Heart right ventricle (tissue), 16 donors: ENCODE measurements at regions of chr9 and their contacts with region 1.

Region 1: GRCh38 chr9:87324613-87325194 is 173.0 kb upstream of the DAPK1 start:
- DNase-seq: peak in 1 of 2 donors; percentile 18
- ATAC-seq: peak in 7 of 8 donors; percentile 56 to 85 (median 71)
- H3K4me3 ChIP-seq: no peak overlapping the region
- H3K27ac ChIP-seq: no peak overlapping the region
- H3K4me1 ChIP-seq: no peaks in the 10 kb centered on the region
- H3K27me3 ChIP-seq: peaks cover 0 to 4% (median 0%) of the 10 kb centered on the region in 7 donors
- CTCF ChIP-seq: peak; percentile 60 to 86 (median 82)

Region 2: GRCh38 chr9:86434039-86434726 is 890.5 kb before region 1 on chr9:
- intact Hi-C with region 1: loop called (anchors 2 to 10 kb)
- DNase-seq: peak in 1 of 2 donors; percentile 17
- ATAC-seq: peak in 7 of 8 donors; percentile 47 to 78 (median 71)
- H3K4me3 ChIP-seq: peak overlapping the region in 2 of 10 donors; percentile 14 to 18
- H3K27ac ChIP-seq: peak overlapping the region in 3 of 10 donors; percentile 4 to 35 (median 17)
- H3K4me1 ChIP-seq: peaks cover 0 to 4% (median 0%) of the 10 kb centered on the region in 9 donors
- H3K27me3 ChIP-seq: peaks cover 0 to 11% (median 4%) of the 10 kb centered on the region in 7 donors
- CTCF ChIP-seq: peak; percentile 47 to 82 (median 73)

Region 3: DNA sequence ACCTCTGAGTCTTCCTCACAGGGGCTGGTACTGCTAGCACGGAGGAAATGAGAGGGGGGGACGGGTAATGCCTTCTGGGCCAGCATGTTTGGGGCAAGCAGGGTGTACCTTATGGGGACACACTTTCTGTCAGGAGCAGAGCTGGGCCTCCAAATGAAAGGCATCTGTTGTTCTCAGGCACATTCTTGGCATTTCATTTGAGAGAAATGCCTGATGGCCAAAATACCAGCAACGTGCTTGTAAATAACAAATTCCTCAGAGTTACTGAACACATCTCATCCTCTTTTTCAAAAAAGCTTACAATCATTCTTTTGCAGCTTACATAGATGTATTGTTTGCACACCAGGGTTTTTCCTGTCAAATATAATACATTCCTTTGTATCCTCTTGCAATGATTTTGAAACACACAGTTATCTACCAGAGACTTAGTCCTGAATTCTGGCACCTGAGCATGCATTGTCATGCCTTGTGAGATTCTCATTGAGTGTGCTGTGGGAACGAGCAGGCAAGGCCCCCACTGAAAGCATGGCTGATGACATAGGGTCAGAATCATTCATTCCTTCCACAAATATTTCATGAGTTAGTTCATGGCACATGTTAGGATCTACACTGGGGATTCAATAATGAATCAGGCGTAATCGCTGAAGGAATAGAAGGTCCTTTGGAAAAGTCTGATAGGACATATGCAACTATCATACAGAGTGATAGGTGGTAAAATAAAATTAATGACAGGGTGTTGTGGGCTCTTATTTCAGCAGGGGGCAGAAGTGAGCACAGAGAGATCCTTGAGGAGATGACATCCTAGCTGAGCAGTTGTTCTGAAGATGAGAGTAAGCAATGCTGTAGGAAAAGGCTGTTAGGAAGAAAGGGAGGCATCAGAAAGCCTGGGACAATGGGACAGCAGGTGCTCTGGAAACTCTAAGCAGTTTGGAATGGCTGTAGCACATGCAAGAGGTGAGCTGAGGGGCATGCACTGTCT is 709.5 kb before region 1 on chr9:
- intact Hi-C with region 1: loop called in 2 of 10 experiments (anchors 5 to 10 kb)
- DNase-seq: peak in 1 of 2 donors; percentile 15
- ATAC-seq: peak in 3 of 8 donors; percentile 17 to 37 (median 35)
- H3K4me3 ChIP-seq: no peak overlapping the region
- H3K27ac ChIP-seq: no peak overlapping the region
- H3K4me1 ChIP-seq: peaks cover 0 to 8% (median 0%) of the 10 kb centered on the region in 9 donors
- H3K27me3 ChIP-seq: no peaks in the 10 kb centered on the region
- CTCF ChIP-seq: peak; percentile 10 to 56 (median 40)

Region 4: GRCh38 chr9:86637515-86637914 is 687.2 kb before region 1 on chr9:
- intact Hi-C with region 1: loop called in 5 of 10 experiments (anchors 5 to 10 kb)
- DNase-seq: peak; percentile 26 to 40
- ATAC-seq: peak in 3 of 8 donors; percentile 25 to 75 (median 51)
- H3K4me3 ChIP-seq: no peak overlapping the region
- H3K27ac ChIP-seq: no peak overlapping the region
- H3K4me1 ChIP-seq: peaks cover 0 to 2% (median 0%) of the 10 kb centered on the region in 9 donors
- H3K27me3 ChIP-seq: peaks cover 0 to 13% (median 4%) of the 10 kb centered on the region in 7 donors
- CTCF ChIP-seq: peak; percentile 16 to 63 (median 50)

Region 5: DNA sequence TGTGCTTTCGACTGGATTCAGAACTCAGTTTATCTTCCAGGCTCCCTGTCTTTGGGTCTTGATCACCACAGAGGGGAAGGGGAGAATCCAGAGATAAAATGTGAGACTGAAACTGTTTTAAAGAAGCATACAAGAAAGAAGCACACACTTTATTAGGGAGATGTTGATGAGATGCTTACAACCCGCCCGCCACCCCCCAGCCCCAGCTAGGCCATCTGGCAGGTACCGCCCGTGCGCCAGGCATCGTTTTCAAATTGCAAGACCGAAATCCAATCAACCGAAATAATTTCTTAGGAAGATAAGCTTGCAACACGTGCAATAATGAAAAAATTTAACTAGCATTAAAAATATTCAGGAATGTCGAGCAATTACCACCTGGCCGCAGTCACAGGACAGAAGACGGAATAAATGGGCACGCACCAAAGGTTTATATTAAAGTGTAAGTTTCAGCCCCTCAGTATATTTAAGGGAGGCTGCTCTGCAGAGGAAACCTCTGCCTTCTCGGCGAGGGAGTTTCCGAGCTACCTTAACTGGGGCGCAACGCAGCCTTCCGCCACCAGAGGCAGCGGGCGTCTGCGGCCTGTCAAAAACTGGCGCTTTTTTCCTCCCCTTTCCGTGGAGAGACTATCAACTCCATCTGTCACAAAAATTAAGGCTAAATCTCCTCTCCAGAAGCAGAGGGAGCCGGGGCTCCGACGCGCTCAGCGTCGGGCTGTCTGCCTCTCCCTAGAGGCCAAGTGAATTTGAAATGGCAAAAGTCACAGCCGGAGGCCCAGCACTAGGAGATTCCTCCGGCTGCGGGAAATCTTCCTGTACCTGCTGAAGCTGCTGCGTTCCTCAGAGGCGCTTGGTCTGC is 376.4 kb before region 1 on chr9:
- intact Hi-C with region 1: loop called in 7 of 10 experiments (anchors 1 to 10 kb)
- DNase-seq: peak; percentile 78 to 81
- ATAC-seq: peak; percentile 53 to 93 (median 83)
- H3K4me3 ChIP-seq: peak overlapping the region; percentile 65 to 96 (median 85)
- H3K27ac ChIP-seq: peak overlapping the region; percentile 53 to 97 (median 92)
- H3K4me1 ChIP-seq: peaks cover 0 to 37% (median 12%) of the 10 kb centered on the region in 9 donors
- H3K27me3 ChIP-seq: peaks cover 0 to 27% (median 0%) of the 10 kb centered on the region in 7 donors
- CTCF ChIP-seq: peak; percentile 81 to 90 (median 86)

Region 6: DNA sequence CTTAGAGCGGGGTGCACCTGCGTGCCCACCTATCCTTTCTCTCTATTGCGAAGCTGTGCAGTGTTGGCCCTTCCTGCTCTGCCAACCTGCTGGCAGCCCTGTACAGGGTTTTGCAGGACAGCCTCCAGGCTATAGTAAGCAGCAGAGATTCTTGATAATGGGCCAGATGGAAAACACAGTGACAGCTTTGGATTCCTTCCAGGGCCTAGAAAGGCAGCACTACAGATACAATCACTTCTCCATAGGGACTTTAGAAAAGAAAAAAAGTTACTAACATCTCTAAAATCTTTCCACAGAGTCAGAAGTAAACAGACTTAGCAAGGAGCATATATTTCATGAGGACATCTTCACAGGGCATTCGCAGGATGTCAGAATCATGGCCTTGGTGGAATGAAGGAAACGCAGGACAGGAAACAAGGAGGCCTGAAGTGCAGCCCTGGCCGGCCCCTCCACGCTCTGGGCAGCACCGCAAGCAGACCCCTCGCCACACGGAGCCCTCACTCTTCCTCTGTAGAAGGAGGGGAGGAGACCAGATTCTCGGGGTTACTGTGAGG is 205.3 kb before region 1 on chr9:
- intact Hi-C with region 1: loop called in 1 of 10 experiments (anchors 10 kb)
- DNase-seq: peak; percentile 35 to 54
- ATAC-seq: peak; percentile 63 to 93 (median 82)
- H3K4me3 ChIP-seq: no peak overlapping the region
- H3K27ac ChIP-seq: peak overlapping the region in 4 of 10 donors; percentile 11 to 65 (median 56)
- H3K4me1 ChIP-seq: peaks cover 0 to 49% (median 23%) of the 10 kb centered on the region in 9 donors
- H3K27me3 ChIP-seq: no peaks in the 10 kb centered on the region
- CTCF ChIP-seq: no peak

Region 7: GRCh38 chr9:88660611-88661010 is 1335.9 kb after region 1 on chr9:
- intact Hi-C with region 1: no loop called
- DNase-seq: no peak
- ATAC-seq: no peak
- H3K4me3 ChIP-seq: no peak overlapping the region
- H3K27ac ChIP-seq: no peak overlapping the region
- H3K4me1 ChIP-seq: peaks cover 0 to 12% (median 9%) of the 10 kb centered on the region in 9 donors
- H3K27me3 ChIP-seq: peaks cover 0 to 3% (median 0%) of the 10 kb centered on the region in 7 donors
- CTCF ChIP-seq: peak in 4 of 9 donors; percentile 8 to 37 (median 18)